Activated CD4-positive, alpha-beta memory T cell treated with anti-CD3 and anti-CD28 coated beads, Interleukin-2, amount 10 ng/mL, durations not matched to agents 7 days and 5 days (primary cell): ENCODE measurements at regions of chr11 and their contacts with region 1.

Region 1: GRCh38 chr11:15006139-15006759 is 34.1 kb upstream of the CALCA start:
- DNase-seq: no peak
- H3K4me3 Mint-ChIP-seq: no peak overlapping the region
- H3K27ac Mint-ChIP-seq: no peak overlapping the region
- H3K4me1 Mint-ChIP-seq: no peaks in the 10 kb centered on the region
- H3K27me3 Mint-ChIP-seq: peaks cover 44% of the 10 kb centered on the region

Region 2: GRCh38 chr11:15074206-15075161 is 68.2 kb after region 1 on chr11:
- CTCF ChIA-PET with region 1: interaction called, 26 read pairs
- POLR2A ChIA-PET with region 1: no interaction called
- DNase-seq: peak; percentile 87
- H3K4me3 Mint-ChIP-seq: peak overlapping the region; percentile 63
- H3K27ac Mint-ChIP-seq: peak overlapping the region; percentile 12
- H3K4me1 Mint-ChIP-seq: peaks cover 19% of the 10 kb centered on the region
- H3K27me3 Mint-ChIP-seq: peaks cover 23% of the 10 kb centered on the region